ENCODE measurements at regions of chr7 and their contacts with region 1.

Region 1: GRCh38 chr7:99504603-99505323 is at the start of gene ZKSCAN5:
- DNase-seq: peak; percentile 94 to 98 (median 97)
- ATAC-seq: peak; percentile 85
- H3K4me3 ChIP-seq: peak within 1 kb of the TSS; percentile 90
- H3K4me3 Mint-ChIP-seq: peak within 1 kb of the TSS; percentile 100
- H3K27ac ChIP-seq: peak within 1 kb of the TSS; percentile 93
- H3K27ac Mint-ChIP-seq: peak within 1 kb of the TSS; percentile 95
- H3K4me1 ChIP-seq: peaks cover 42% of the 10 kb centered on the region
- H3K4me1 Mint-ChIP-seq: peaks cover 38% of the 10 kb centered on the region
- H3K27me3 ChIP-seq: no peaks in the 10 kb centered on the region
- H3K27me3 Mint-ChIP-seq: no peaks in the 10 kb centered on the region
- CTCF ChIP-seq: peak; percentile 16
- total RNA-seq, gene ZKSCAN5: 3.8 to 4.4 TPM

Region 2: GRCh38 chr7:99392677-99393354 is 111.9 kb before region 1 on chr7:
- CTCF ChIA-PET with region 1: no interaction called
- POLR2A ChIA-PET with region 1: interaction called, 10 read pairs
- intact Hi-C with region 1: no loop called
- DNase-seq: peak; percentile 67 to 93 (median 81)
- ATAC-seq: peak; percentile 95
- H3K4me3 ChIP-seq: peak overlapping the region; percentile 56
- H3K4me3 Mint-ChIP-seq: peak overlapping the region; percentile 76
- H3K27ac ChIP-seq: peak overlapping the region; percentile 63 to 72
- H3K27ac Mint-ChIP-seq: peak overlapping the region; percentile 94
- H3K4me1 ChIP-seq: peaks cover 28% of the 10 kb centered on the region
- H3K4me1 Mint-ChIP-seq: peaks cover 18% of the 10 kb centered on the region
- H3K27me3 ChIP-seq: no peaks in the 10 kb centered on the region
- H3K27me3 Mint-ChIP-seq: no peaks in the 10 kb centered on the region
- CTCF ChIP-seq: no peak

Region 3: GRCh38 chr7:99472561-99473243 is 32.1 kb before region 1 on chr7 and contains the start of gene ZNF789:
- CTCF ChIA-PET with region 1: interaction called, 7 read pairs
- POLR2A ChIA-PET with region 1: interaction called, 46 read pairs
- intact Hi-C with region 1: loop called (anchors 1 to 2 kb)
- DNase-seq: peak; percentile 97 to 98 (median 98)
- ATAC-seq: peak; percentile 95
- H3K4me3 ChIP-seq: peak within 1 kb of the TSS; percentile 75
- H3K4me3 Mint-ChIP-seq: peak within 1 kb of the TSS; percentile 95
- H3K27ac ChIP-seq: peak within 1 kb of the TSS; percentile 78 to 81
- H3K27ac Mint-ChIP-seq: peak within 1 kb of the TSS; percentile 90
- H3K4me1 ChIP-seq: peaks cover 38% of the 10 kb centered on the region
- H3K4me1 Mint-ChIP-seq: peaks cover 40% of the 10 kb centered on the region
- H3K27me3 ChIP-seq: no peaks in the 10 kb centered on the region
- H3K27me3 Mint-ChIP-seq: no peaks in the 10 kb centered on the region
- CTCF ChIP-seq: no peak
- total RNA-seq, gene ZNF789: 11.5 to 13.5 TPM

Region 4: GRCh38 chr7:99558306-99559174 is 53.8 kb after region 1 on chr7 and contains the start of gene ZNF655:
- CTCF ChIA-PET with region 1: no interaction called
- POLR2A ChIA-PET with region 1: interaction called, 99 read pairs
- intact Hi-C with region 1: loop called (anchors 2 kb)
- DNase-seq: peak; percentile 83 to 96 (median 88)
- ATAC-seq: peak; percentile 79
- H3K4me3 ChIP-seq: peak within 1 kb of the TSS; percentile 98
- H3K4me3 Mint-ChIP-seq: peak within 1 kb of the TSS; percentile 93
- H3K27ac ChIP-seq: peak within 1 kb of the TSS; percentile 95 to 96
- H3K27ac Mint-ChIP-seq: peak within 1 kb of the TSS; percentile 95
- H3K4me1 ChIP-seq: peaks cover 45% of the 10 kb centered on the region
- H3K4me1 Mint-ChIP-seq: peaks cover 58% of the 10 kb centered on the region
- H3K27me3 ChIP-seq: no peaks in the 10 kb centered on the region
- H3K27me3 Mint-ChIP-seq: no peaks in the 10 kb centered on the region
- CTCF ChIP-seq: no peak
- total RNA-seq, gene ZNF655: 145 to 146 TPM

Region 5: GRCh38 chr7:99624484-99624883 is 119.7 kb after region 1 on chr7:
- CTCF ChIA-PET with region 1: no interaction called
- POLR2A ChIA-PET with region 1: interaction called, 11 read pairs
- intact Hi-C with region 1: no loop called
- DNase-seq: peak; percentile 48 to 91 (median 63)
- ATAC-seq: peak; percentile 96
- H3K4me3 ChIP-seq: peak overlapping the region; percentile 46
- H3K4me3 Mint-ChIP-seq: peak overlapping the region; percentile 85
- H3K27ac ChIP-seq: peak overlapping the region; percentile 66 to 67
- H3K27ac Mint-ChIP-seq: peak overlapping the region; percentile 92
- H3K4me1 ChIP-seq: peaks cover 39% of the 10 kb centered on the region
- H3K4me1 Mint-ChIP-seq: peaks cover 49% of the 10 kb centered on the region
- H3K27me3 ChIP-seq: no peaks in the 10 kb centered on the region
- H3K27me3 Mint-ChIP-seq: no peaks in the 10 kb centered on the region
- CTCF ChIP-seq: no peak

Region 6: DNA sequence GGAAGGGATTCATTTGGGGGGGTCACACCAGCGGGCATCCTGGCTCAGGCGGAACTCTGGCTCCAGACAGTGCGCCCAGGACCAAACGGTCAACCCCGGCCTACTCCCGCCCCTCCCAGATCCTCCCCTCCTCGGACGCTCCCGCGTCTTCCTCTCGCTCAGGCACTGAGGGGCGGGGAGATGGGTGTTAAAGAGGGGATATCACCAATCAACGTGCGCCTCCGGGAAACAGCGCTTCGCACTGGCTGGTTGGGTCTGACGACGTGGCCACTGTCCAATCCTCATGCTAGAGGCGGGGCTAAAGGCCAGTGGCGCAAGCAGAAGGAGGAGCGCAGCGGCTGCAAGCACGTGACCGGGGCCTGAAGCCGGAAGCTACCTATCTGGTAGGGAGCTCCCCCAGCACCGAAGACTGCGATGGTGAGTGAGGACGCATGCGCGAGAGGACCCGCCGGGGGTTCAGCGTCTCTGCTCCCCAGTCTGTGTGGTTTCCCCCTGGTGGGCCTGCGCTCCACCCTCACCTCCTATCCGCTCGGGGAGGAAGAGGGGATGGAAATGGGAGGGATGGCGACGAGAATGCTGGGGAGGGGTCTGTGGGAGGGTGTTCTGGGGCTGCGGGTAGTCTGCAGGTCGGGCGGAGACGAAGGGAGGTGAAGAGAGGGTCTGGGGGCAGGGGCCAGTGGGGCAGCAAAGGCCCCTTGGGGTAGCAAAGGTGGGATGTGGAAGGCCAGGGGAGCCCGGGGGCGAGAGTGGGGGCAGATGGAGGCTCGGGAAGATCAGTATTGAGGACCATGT is 644.0 kb after region 1 on chr7 and contains the start of gene LAMTOR4:
- CTCF ChIA-PET with region 1: no interaction called
- POLR2A ChIA-PET with region 1: no interaction called
- intact Hi-C with region 1: no loop called
- DNase-seq: peak; percentile 94 to 100 (median 97)
- ATAC-seq: peak; percentile 95
- H3K4me3 ChIP-seq: peak within 1 kb of the TSS; percentile 99
- H3K4me3 Mint-ChIP-seq: peak within 1 kb of the TSS; percentile 92
- H3K27ac ChIP-seq: peak within 1 kb of the TSS; percentile 93 to 94
- H3K27ac Mint-ChIP-seq: peak within 1 kb of the TSS; percentile 95
- H3K4me1 ChIP-seq: peaks cover 41% of the 10 kb centered on the region
- H3K4me1 Mint-ChIP-seq: peaks cover 38% of the 10 kb centered on the region
- H3K27me3 ChIP-seq: no peaks in the 10 kb centered on the region
- H3K27me3 Mint-ChIP-seq: no peaks in the 10 kb centered on the region
- CTCF ChIP-seq: peak; percentile 9
- total RNA-seq, gene LAMTOR4: 107 to 125 TPM